Aorta (tissue), 5 donors: ENCODE measurements at regions of chr1 and their contacts with region 1.

Region 1: GRCh38 chr1:181088079-181089016 is at the start of gene IER5:
- DNase-seq: peak; percentile 97 to 98
- ATAC-seq: peak; percentile 98
- H3K4me3 ChIP-seq: peak within 1 kb of the TSS; percentile 65 to 99
- H3K27ac ChIP-seq: peak within 1 kb of the TSS; percentile 50 to 81
- H3K4me1 ChIP-seq: peaks cover 2 to 3% of the 10 kb centered on the region in 2 donors
- H3K27me3 ChIP-seq: no peaks in the 10 kb centered on the region
- total RNA-seq, gene IER5: 11.4 to 42.2 TPM

Region 2: GRCh38 chr1:181033799-181034451 is 54.4 kb before region 1 on chr1 and contains the start of gene MR1:
- intact Hi-C with region 1: loop called in 1 of 2 experiments (anchors 10 kb)
- DNase-seq: no peak
- ATAC-seq: peak; percentile 96
- H3K4me3 ChIP-seq: peak within 1 kb of the TSS; percentile 72 to 74
- H3K27ac ChIP-seq: peak within 1 kb of the TSS; percentile 99 to 100
- H3K4me1 ChIP-seq: peaks cover 6 to 7% of the 10 kb centered on the region in 2 donors
- H3K27me3 ChIP-seq: no peaks in the 10 kb centered on the region
- total RNA-seq, gene MR1: 22.0 to 23.9 TPM

Region 3: DNA sequence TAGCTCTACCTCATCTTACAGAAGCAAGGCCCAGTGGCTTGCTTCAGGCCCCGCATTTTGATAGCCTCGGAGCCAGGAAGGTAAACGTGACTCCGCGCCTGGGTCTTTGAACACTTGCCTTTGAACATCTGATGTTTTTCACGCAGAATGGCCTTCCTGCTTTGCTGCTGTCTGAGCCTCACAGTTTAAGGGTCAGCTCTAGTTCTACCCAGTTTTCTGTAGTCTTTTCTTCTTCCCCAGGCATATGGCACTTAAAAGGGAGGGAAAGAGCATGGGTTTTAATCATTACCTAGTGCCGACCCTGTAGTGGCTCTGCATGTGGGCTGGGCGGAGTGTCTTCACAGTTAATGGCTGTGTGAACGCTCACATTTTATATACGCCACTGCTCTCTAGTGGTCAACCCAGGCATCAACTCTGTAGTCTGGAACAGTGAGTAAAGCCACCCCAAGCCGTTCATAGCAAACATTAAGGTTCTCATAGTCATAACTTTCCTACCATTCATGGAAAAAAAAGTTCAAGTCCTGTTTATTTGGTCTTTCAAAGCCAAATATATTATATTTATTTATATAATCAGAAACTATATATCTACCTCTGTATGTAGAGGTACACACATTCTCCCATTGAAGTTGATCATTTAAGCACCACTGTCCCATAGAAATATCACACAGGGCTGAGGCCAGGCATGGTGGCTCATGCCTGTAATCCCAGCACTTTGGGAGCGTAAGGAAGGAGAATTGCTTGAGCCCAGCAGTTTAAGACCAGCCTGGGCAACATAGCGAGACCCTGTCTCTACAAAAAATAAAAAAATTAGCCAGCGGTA is 78.2 kb after region 1 on chr1:
- intact Hi-C with region 1: loop called in 1 of 2 experiments (anchors 5 kb)
- DNase-seq: peak; percentile 75 to 79
- ATAC-seq: peak; percentile 92
- H3K4me3 ChIP-seq: no peak overlapping the region
- H3K27ac ChIP-seq: no peak overlapping the region
- H3K4me1 ChIP-seq: no peaks in the 10 kb centered on the region
- H3K27me3 ChIP-seq: no peaks in the 10 kb centered on the region

Region 4: GRCh38 chr1:181459067-181459466 is 370.7 kb after region 1 on chr1:
- intact Hi-C with region 1: no loop called
- DNase-seq: no peak
- ATAC-seq: no peak
- H3K4me3 ChIP-seq: no peak overlapping the region
- H3K27ac ChIP-seq: no peak overlapping the region
- H3K4me1 ChIP-seq: no peaks in the 10 kb centered on the region
- H3K27me3 ChIP-seq: no peaks in the 10 kb centered on the region